ENCODE measurements at regions of chr10 and their contacts with region 1.

Region 1: GRCh38 chr10:36534471-36535002 is 590.9 kb upstream of the ANKRD30A start:
- DNase-seq: peak; percentile 99
- H3K4me3 ChIP-seq: no peak overlapping the region
- H3K27ac ChIP-seq: peak overlapping the region; percentile 65
- H3K4me1 ChIP-seq: peaks cover 25% of the 10 kb centered on the region
- H3K27me3 ChIP-seq: no peaks in the 10 kb centered on the region
- CTCF ChIP-seq: no peak

Region 2: GRCh38 chr10:36271627-36272340 is 262.8 kb before region 1 on chr10:
- CTCF ChIA-PET with region 1: no interaction called
- dilution Hi-C with region 1: no loop called
- in situ Hi-C with region 1: no loop called
- intact Hi-C with region 1: loop called (anchors 2 kb)
- DNase-seq: peak; percentile 90
- H3K4me3 ChIP-seq: no peak overlapping the region
- H3K27ac ChIP-seq: peak overlapping the region; percentile 90
- H3K4me1 ChIP-seq: peaks cover 18% of the 10 kb centered on the region
- H3K27me3 ChIP-seq: no peaks in the 10 kb centered on the region
- CTCF ChIP-seq: no peak

Region 3: DNA sequence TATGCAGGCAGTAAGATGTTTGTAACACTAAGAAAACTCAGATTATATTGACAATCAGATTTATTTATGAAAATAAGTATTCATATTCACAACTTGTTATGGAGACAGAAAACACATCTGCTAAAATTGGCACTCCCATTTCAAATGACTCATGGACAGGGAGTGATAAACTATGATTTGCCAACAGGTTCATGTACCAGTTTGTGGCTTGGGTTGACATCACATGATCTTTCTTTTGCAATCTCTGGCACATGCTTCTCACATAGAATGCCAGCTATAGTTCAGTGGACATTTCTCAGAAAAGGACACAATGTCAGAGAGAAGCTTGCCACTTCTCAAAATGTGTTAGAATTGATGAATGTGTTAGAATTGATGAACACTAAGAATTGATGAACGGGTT is 72.3 kb before region 1 on chr10:
- CTCF ChIA-PET with region 1: no interaction called
- dilution Hi-C with region 1: no loop called
- in situ Hi-C with region 1: no loop called
- intact Hi-C with region 1: loop called (anchors 10 kb)
- DNase-seq: peak; percentile 86
- H3K4me3 ChIP-seq: no peak overlapping the region
- H3K27ac ChIP-seq: no peak overlapping the region
- H3K4me1 ChIP-seq: peaks cover 5% of the 10 kb centered on the region
- H3K27me3 ChIP-seq: no peaks in the 10 kb centered on the region
- CTCF ChIP-seq: no peak

Region 4: GRCh38 chr10:36515319-36515718 is 19.2 kb before region 1 on chr10:
- CTCF ChIA-PET with region 1: no interaction called
- dilution Hi-C with region 1: no loop called
- in situ Hi-C with region 1: no loop called
- intact Hi-C with region 1: no loop called
- DNase-seq: no peak
- H3K4me3 ChIP-seq: no peak overlapping the region
- H3K27ac ChIP-seq: no peak overlapping the region
- H3K4me1 ChIP-seq: no peaks in the 10 kb centered on the region
- H3K27me3 ChIP-seq: no peaks in the 10 kb centered on the region
- CTCF ChIP-seq: no peak

Region 5: DNA sequence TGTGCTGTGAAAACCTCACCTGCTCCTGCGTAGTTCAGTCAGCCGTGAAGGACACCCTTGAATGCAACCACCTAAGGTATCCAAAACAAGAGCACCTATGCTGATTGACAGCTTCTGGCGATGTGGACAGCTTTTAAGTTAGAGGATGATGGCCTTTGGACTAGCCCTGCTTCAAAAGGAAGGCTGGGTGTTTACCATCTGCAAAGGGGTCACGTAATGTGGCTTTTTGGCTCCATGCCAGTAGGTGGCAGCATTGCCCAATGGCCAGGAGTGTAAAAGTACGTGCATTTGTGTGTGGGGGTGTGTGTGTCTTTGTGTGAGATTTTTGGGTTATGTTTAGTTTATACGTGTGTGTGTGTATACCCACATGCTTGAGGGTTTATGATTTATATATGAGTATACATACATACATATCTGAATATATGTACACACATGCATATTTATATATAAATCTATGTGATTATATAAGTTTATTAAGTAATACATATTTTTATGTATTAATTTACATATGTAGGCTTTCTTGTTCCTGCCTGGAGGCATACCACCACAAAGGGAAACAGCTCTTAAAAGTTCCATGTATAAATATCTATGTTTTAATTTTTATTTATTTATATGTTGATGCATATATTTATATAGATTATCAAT is 354.5 kb after region 1 on chr10:
- CTCF ChIA-PET with region 1: no interaction called
- dilution Hi-C with region 1: no loop called
- in situ Hi-C with region 1: no loop called
- intact Hi-C with region 1: no loop called
- DNase-seq: peak; percentile 31
- H3K4me3 ChIP-seq: no peak overlapping the region
- H3K27ac ChIP-seq: no peak overlapping the region
- H3K4me1 ChIP-seq: no peaks in the 10 kb centered on the region
- H3K27me3 ChIP-seq: no peaks in the 10 kb centered on the region
- CTCF ChIP-seq: peak; percentile 34 to 36